GM18951 (cell line): ENCODE measurements at regions of chr3 and their contacts with region 1.

Region 1: GRCh38 chr3:15384510-15385237 is 42.7 kb downstream of the METTL6 start:
- POLR2A ChIP-seq: no peak

Region 2: DNA sequence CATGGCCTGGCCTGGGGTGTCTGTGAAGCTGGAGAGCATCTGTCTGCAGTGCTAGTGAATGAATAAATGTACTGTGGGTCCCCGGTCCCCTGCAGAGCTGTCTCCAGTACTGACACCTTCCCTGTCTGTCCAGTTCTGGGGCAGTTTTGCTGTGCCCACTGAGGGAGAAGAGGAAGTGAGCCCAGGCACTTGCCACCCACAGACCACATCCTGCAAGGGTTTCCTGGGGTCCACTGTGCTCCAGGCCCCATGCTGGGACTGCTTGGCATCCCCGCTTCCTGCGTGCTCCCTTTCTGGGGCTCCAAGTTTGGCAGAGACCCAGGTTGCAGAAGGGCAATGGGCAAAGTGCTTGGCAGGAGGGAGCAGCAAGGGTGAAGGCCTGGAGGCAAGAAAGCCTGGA is 987.1 kb before region 1 on chr3:
- in situ Hi-C with region 1: no loop called
- POLR2A ChIP-seq: no peak

Region 3: DNA sequence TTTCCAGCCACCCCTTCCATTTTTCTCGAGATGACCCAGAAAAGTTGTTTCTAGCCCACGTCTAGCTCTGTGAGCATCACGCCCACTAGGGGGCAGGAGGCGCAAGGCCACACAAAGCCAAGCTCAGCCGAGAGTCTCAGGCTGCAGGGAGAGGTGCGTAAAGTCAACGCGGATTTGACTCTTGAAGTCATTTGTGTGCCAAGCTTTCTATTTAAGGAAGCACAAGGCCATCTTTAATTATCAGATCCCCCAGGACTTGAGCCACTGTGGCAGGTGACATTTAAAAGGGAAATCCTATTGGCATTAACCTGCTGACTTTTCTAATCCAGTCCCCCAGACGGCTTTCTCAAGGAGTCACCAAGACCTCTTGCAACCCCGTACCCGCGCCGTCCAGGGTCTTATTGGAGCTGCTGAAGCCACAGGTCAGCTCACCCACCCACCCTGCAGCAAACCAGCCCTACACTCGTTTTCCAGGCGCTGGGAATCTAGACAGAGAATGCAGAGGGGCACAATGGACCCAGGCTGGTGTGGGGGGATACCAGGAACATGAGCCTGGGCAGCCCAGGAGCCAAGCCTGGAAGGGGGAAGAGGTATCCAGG is 116.5 kb before region 1 on chr3:
- in situ Hi-C with region 1: loop called (anchors 10 kb)
- POLR2A ChIP-seq: no peak